Dendritic cell treated with granulocyte-macrophage colony-stimulating factor and Interleukin-4, amounts not matched to agents 40 ng/mL and 50 ng/mL, for 4 days (primary cell): ENCODE measurements at regions of chr17 and their contacts with region 1.

Region 1: DNA sequence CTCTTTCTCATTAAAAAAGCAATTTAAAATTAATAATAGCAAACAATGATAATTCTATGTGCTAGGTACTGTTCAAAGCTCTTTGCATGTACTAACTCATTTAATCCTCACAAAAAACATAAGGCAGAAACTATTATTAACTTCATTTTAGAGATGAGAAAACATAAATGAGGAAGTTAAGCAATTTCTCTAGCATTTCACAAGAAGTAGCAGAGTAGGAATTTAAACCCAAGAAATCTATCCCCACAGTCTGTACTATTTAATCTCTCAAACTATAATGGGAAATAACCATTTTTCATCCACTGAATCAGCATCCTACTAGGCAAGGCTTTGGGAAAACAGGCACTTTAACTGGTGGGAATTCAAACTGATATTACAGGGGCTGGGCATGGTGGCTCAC is 42.2 kb upstream of the INTS2 start:
- H3K4me3 Mint-ChIP-seq: no peak overlapping the region
- H3K27ac Mint-ChIP-seq: peak overlapping the region; percentile 48
- H3K4me1 Mint-ChIP-seq: peaks cover 9% of the 10 kb centered on the region
- H3K27me3 Mint-ChIP-seq: no peaks in the 10 kb centered on the region

Region 2: GRCh38 chr17:62014526-62014925 is 44.5 kb after region 1 on chr17:
- intact Hi-C with region 1: no loop called
- H3K4me3 Mint-ChIP-seq: no peak overlapping the region
- H3K27ac Mint-ChIP-seq: no peak overlapping the region
- H3K4me1 Mint-ChIP-seq: no peaks in the 10 kb centered on the region
- H3K27me3 Mint-ChIP-seq: no peaks in the 10 kb centered on the region

Region 3: GRCh38 chr17:62024894-62025293 is 54.9 kb after region 1 on chr17:
- intact Hi-C with region 1: loop called (anchors 5 kb)
- H3K4me3 Mint-ChIP-seq: no peak overlapping the region
- H3K27ac Mint-ChIP-seq: no peak overlapping the region
- H3K4me1 Mint-ChIP-seq: no peaks in the 10 kb centered on the region
- H3K27me3 Mint-ChIP-seq: no peaks in the 10 kb centered on the region